ENCODE measurements at regions of chr10 and their contacts with region 1.

Region 1: DNA sequence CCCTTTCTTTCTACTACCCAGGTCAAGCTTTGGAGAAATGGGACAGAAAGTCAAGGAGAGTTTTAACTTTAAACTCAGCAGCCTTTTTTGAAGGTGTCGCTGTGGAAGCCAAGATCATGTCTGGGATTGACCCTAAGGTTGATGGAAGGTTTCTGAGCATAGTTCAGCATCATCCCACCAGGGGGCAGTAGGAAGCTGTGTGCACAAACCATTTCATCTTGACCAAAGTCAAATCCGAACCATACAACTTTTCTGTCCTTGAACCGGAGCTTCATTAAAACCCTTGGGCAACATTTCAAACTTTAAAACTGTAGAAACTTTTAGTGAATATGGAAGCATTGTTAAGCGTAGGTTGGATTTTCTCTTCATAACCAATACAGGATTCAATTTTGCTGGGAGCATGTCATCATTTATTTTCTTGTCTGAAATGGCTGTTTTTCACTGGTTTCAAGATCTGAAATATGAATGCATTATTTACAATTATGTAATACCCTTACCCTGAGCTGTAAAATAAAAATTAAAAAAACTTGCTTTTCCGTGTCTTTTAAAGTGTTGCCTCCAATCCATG is 214.4 kb upstream of the KIAA1217 start:
- DNase-seq: no peak

Region 2: GRCh38 chr10:24255881-24256311 is 261.3 kb after region 1 on chr10:
- intact Hi-C with region 1: no loop called
- DNase-seq: no peak

Region 3: GRCh38 chr10:24360282-24361127 is 365.9 kb after region 1 on chr10:
- intact Hi-C with region 1: loop called (anchors 5 kb)
- DNase-seq: no peak

Region 4: GRCh38 chr10:24518981-24519597 is 524.5 kb after region 1 on chr10:
- intact Hi-C with region 1: loop called (anchors 5 kb)
- DNase-seq: no peak

Measured in cardiac septum (tissue), 1 donor.